Left colon (tissue), 2 donors: ENCODE measurements at regions of chr5 and their contacts with region 1.

Region 1: DNA sequence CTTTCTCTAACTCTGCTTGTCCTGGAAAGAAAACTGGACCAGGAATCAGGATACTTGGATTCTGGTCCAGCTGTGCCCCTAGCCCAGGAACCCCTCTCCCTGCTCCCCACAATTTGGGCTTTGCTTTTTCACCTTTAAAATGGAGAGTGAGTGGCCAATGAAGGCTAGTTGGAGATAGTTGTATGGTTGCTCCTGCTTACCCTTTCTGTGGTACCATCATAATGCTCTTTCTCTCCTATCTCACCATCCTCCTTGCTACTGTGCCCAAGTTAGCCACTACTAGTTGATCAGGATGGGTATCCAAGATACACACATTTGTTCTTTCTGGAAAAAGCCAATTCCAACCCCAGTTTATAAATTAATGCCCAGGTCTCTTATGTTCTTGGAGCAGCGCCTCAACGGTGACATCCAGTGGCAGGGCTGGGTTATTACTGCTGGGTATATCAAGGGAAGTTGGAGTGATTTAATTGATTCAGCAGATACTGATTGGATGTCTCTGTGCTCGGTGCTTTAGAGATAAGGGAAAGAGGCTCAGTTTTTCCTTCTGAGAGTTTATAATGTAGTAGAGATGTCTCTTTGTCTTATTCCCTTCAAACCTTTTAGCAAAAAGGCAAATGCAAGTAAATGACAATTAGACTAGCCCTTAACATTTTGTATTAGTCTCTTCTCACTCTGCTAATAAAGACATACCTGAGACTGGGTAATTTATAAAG is 38.6 kb downstream of the FAXDC2 start:
- DNase-seq: peak; percentile 48 to 62
- ATAC-seq: peak; percentile 86

Region 2: DNA sequence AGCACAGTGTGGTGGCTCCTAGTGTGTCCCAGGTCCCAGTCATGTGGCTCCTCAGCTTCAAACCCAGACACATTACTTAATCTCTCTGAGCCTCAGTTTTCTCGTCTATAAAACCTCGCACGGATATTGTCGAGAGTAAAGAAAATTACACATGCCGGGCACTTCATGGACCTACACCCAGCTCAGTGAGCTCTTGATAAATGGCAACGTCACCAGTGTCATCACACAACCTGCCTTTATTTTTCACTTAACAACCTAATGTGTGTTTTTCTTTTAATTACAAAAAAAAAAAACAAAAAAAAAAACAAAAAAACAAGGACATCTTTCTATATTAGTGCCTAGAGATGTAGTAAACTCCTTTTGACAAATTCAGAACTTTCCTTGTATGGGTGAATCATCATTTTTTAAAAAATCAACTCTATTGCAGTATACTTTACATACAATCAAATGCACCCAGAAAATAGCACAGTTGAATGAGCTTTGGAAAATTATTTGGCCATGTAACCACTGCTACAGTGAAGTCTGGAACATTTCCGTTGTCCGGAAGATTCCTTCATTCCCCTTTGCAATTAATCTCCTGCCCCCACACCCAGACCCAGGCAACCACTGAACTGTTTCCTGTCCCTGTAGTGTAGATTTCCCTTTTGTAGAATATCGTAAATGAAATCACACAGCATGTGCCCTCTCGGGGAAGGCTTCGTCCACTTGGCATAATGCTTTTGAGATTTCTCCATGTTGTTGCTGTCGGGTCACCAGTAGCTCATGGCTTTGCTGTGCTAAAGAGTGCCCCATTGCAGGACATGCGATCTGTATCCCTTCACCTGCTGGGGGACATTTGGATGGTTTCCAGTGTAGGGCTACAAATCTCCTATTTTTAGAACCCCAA is 157.1 kb before region 1 on chr5:
- intact Hi-C with region 1: loop called in 1 of 2 experiments (anchors 5 kb)
- DNase-seq: no peak
- ATAC-seq: peak; percentile 50

Region 3: GRCh38 chr5:154683101-154683880 is 128.5 kb before region 1 on chr5:
- intact Hi-C with region 1: no loop called
- DNase-seq: no peak
- ATAC-seq: peak; percentile 13

Region 4: GRCh38 chr5:154754460-154755360 is 57.1 kb before region 1 on chr5:
- intact Hi-C with region 1: no loop called
- DNase-seq: peak; percentile 100
- ATAC-seq: peak; percentile 85